BJ (cell line): ENCODE measurements at regions of chr9 and their contacts with region 1.

Region 1: DNA sequence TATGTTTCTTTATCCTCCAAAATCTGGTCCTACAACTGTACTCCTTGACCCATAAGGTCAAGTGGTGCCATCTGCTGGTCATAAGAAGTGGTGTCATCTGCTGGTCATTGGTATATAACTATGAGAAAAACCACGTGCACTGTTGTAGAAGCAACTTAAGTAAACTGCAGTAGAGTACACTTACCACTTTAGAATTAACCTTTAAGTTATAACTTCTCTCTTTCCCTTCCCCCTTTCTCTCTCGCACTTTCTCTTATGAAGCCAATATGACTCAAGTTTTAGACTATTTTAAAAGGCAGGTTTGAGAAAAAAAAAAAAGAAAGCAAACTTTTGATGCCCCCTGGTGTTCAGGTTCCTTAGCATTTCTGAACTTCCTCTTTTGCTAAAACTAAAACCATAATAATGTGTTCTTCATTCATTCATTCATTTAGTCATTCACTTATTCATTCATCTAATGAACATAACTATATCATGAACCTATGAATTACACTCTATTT is 12.8 kb upstream of the MTAP start:
- DNase-seq: peak; percentile 63
- H3K4me3 ChIP-seq: 0 out of 2 replicates have a peak overlapping the region, but pooled peaks have one; percentile 17
- H3K27me3 ChIP-seq: no peaks in the 10 kb centered on the region
- CTCF ChIP-seq: peak; percentile 71

Region 2: GRCh38 chr9:21286659-21287058 is 502.9 kb before region 1 on chr9:
- CTCF ChIA-PET with region 1: no interaction called
- POLR2A ChIA-PET with region 1: no interaction called
- DNase-seq: no peak
- H3K4me3 ChIP-seq: no peak overlapping the region
- H3K27me3 ChIP-seq: peaks cover 3% of the 10 kb centered on the region; the same call in 1 of the 2 replicates
- CTCF ChIP-seq: no peak

Region 3: DNA sequence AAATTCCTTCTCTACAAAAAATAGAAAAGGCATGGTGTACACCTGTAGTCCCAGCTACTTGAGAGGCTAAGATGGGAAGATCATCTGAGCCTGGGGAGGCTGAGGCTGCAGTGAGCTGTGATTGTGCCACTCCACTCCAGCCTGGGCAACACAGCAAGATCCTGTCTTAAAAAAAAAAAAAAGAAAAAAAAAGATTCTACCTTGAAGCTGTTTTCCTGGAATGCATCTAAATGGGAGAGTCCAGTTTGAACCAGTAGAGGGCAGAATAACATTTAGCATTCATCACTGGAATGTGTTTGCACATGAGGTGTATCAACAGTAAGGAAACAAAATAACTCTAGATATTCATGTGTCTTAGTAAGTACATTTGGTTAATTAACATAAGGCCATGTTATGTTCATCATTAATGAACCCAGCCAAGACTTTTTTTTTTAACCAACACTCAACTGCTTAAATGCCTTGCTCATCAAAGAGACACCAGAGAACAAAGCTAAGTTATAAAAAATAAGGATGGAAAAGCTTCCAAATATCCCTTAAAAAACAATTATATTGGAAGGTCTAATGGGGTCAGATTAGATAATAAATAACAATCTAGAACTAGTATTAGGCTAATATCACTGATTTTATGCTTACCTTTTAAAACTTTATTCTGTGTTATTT is 323.6 kb before region 1 on chr9:
- CTCF ChIA-PET with region 1: interaction called, 14 read pairs
- POLR2A ChIA-PET with region 1: no interaction called
- DNase-seq: peak; percentile 19
- H3K4me3 ChIP-seq: no peak overlapping the region
- H3K27me3 ChIP-seq: no peaks in the 10 kb centered on the region
- CTCF ChIP-seq: peak; percentile 67

Region 4: DNA sequence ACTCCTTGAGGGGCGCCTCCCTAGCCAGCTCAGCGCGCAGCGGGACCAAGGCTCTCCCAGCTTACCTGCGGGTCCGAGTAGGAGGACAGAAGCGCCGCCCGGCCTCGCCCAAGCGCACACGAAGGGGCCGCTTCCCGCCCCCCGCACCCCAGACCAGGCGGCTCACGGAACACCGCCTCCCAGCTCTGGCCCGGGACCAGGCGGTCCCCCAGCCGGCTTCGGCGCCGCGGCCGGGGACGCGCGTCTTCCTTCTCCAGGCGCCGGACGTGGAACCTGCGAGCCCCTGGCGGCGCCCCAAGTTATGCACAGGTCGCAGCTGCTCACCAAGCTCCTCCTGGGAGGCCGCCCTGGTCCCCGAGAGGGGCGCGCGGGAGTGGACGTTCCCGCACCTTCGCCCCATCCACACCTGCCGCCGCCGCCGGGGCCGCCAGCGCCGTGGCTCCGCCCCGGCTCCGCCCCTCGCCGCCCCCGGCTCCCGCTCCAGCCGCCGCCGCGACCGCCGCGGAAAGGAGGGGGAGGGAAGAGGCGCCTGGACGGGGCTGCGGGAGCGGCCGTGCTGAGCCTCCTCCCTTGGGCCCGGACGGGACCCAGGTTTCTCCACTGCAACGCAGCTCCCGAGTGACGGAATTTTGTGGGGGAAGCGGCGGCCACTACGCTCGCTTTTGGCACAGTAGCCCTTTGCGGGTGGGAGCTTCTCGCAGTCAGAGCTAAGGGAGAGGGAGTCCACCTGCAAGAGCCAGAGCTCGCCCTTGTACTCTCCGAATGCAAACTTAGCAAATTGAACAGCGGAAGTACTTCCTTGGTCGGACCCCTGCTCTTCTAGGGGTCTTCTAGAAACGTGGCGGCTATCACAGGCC is 229.9 kb before region 1 on chr9:
- CTCF ChIA-PET with region 1: interaction called, 14 read pairs
- POLR2A ChIA-PET with region 1: no interaction called
- DNase-seq: no peak
- H3K4me3 ChIP-seq: peak overlapping the region; percentile 89
- H3K27me3 ChIP-seq: no peaks in the 10 kb centered on the region
- CTCF ChIP-seq: no peak

Region 5: DNA sequence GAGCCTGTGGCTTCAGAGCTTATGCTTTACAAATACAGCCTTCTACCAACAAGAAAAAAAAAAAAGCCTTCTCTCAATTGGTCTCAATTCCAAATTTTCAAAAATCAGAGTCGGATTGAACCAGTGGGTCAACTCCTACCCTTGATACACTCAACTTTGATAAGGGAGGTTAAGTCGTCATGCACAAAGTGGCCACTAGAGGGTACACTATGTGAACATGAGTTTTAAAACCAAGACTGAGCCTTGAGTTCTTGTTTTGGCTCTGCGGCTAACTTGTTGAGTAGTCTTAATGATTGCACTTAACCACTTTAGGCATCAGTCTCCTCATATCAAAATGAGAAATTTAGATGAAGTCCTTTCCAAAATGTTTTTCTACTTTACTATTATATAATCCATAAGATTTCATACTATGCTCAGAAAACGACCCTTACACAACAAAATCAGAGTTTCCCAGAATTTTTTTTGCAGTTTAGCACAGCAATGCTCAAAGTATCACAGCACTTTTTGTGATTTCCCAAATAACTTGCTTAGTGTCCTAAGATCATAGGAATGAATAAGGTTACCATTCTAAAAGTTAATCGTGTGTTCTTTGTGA is 80.0 kb before region 1 on chr9:
- CTCF ChIA-PET with region 1: interaction called, 24 read pairs
- POLR2A ChIA-PET with region 1: no interaction called
- DNase-seq: no peak
- H3K4me3 ChIP-seq: no peak overlapping the region
- H3K27me3 ChIP-seq: no peaks in the 10 kb centered on the region
- CTCF ChIP-seq: peak; percentile 69

Region 6: DNA sequence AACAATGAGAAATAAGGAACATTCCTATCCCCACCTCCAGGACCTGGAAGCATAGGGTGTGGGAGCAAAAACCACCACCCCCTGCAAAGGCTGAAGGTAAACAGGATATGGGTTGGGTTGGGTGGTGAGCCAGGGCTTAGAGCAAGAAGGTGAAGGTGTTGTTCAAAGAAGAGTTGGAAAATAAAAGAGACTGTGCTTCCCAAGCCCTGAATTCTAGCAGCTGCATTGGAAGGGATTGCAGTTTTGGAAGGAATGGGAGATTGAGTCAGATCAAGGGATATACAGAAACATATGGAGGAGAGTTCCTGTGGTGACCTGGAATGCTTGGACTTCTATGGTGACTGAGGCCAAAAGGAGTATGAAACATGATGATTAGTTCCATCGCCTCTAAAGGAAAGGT is 11.9 kb before region 1 on chr9:
- CTCF ChIA-PET with region 1: interaction called, 15 read pairs
- POLR2A ChIA-PET with region 1: no interaction called
- DNase-seq: peak; percentile 49
- H3K4me3 ChIP-seq: no peak overlapping the region
- H3K27me3 ChIP-seq: no peaks in the 10 kb centered on the region
- CTCF ChIP-seq: no peak